Activated CD8-positive, alpha-beta memory T cell treated with anti-CD3 and anti-CD28 coated beads, Interleukin-2, amount 10 ng/mL, durations not matched to agents 7 days and 5 days (primary cell): ENCODE measurements at regions of chr20 and their contacts with region 1.

Region 1: GRCh38 chr20:45095753-45096371 is 5.1 kb downstream of the KCNS1 start:
- DNase-seq: peak; percentile 72
- ATAC-seq: peak; percentile 59
- H3K4me3 Mint-ChIP-seq: no peak overlapping the region
- H3K27ac Mint-ChIP-seq: no peak overlapping the region
- H3K4me1 Mint-ChIP-seq: peaks cover 16% of the 10 kb centered on the region
- H3K27me3 Mint-ChIP-seq: peaks cover 34% of the 10 kb centered on the region

Region 2: DNA sequence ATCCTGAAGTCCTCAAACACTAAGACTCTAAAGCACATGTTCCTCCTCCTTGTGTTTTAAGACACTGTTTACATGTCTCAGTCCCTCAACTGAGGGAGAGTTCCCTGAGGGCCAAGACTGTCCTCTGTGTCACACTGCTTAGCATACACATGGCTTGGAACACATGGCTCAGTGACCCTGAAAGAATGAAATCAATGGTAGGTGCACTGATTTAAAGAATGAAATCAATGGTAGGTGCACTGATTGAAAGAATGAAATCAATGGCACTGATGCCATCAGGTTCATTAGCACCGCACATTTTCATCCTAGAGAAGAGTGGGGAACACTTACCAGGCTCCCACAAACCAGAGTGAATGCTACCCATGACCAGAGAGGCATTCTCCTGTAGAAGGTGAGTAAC is 145.5 kb before region 1 on chr20:
- CTCF ChIA-PET with region 1: no interaction called
- DNase-seq: no peak
- ATAC-seq: no peak
- H3K4me3 Mint-ChIP-seq: no peak overlapping the region
- H3K27ac Mint-ChIP-seq: peak overlapping the region; percentile 1
- H3K4me1 Mint-ChIP-seq: peaks cover 3% of the 10 kb centered on the region
- H3K27me3 Mint-ChIP-seq: no peaks in the 10 kb centered on the region

Region 3: DNA sequence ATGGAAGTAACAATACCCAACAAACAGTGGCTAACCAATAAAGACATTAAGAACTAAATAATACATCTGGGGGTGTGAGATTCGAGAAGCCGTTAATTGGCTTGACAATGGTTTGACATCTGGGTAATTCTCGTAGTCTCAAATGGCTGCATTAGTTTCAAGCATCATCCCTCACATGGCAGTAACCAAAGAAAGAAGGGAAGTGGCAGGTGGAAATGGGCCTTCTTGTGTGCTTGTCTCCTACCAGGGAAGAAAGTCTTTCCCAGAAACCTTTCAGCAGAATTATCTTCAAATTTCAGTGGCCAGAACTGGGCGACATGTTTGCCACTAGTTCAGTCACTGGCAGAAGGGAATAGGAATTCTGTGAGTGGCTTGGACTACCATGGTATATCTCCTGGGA is 119.2 kb before region 1 on chr20:
- CTCF ChIA-PET with region 1: no interaction called
- DNase-seq: no peak
- ATAC-seq: no peak
- H3K4me3 Mint-ChIP-seq: no peak overlapping the region
- H3K27ac Mint-ChIP-seq: peak overlapping the region; percentile 95
- H3K4me1 Mint-ChIP-seq: peaks cover 65% of the 10 kb centered on the region
- H3K27me3 Mint-ChIP-seq: no peaks in the 10 kb centered on the region

Region 4: DNA sequence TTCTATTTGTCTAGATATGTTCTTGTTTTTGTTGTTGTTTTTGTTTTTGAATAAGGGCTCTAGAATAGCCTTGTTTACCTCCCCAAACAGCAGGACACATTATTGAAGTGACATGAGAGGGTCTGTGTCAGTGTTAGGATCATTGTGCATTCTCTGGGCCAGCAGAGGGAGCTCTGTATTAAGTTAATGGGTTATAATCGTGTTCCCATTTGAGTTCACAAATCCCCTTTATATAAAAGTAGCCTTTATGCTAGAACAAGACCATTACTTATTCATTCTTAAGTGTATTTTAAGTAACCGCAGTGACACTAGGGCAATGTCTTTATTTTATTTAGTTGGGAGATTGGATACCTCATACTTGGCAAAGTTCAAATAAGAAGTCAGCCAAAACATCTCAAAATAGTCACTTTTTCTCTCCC is 84.7 kb before region 1 on chr20:
- CTCF ChIA-PET with region 1: interaction called, 35 read pairs
- DNase-seq: peak; percentile 61
- ATAC-seq: peak; percentile 72
- H3K4me3 Mint-ChIP-seq: no peak overlapping the region
- H3K27ac Mint-ChIP-seq: peak overlapping the region; percentile 25
- H3K4me1 Mint-ChIP-seq: peaks cover 31% of the 10 kb centered on the region
- H3K27me3 Mint-ChIP-seq: no peaks in the 10 kb centered on the region

Region 5: GRCh38 chr20:45044084-45044573 is 51.7 kb before region 1 on chr20:
- CTCF ChIA-PET with region 1: interaction called, 150 read pairs
- DNase-seq: peak; percentile 66
- ATAC-seq: peak; percentile 87
- H3K4me3 Mint-ChIP-seq: no peak overlapping the region
- H3K27ac Mint-ChIP-seq: peak overlapping the region; percentile 83
- H3K4me1 Mint-ChIP-seq: peaks cover 50% of the 10 kb centered on the region
- H3K27me3 Mint-ChIP-seq: no peaks in the 10 kb centered on the region

Region 6: GRCh38 chr20:45052698-45053429 is 43.0 kb before region 1 on chr20:
- CTCF ChIA-PET with region 1: interaction called, 48 read pairs
- DNase-seq: peak; percentile 75
- ATAC-seq: peak; percentile 85
- H3K4me3 Mint-ChIP-seq: peak overlapping the region; percentile 17
- H3K27ac Mint-ChIP-seq: peak overlapping the region; percentile 75
- H3K4me1 Mint-ChIP-seq: peaks cover 73% of the 10 kb centered on the region
- H3K27me3 Mint-ChIP-seq: no peaks in the 10 kb centered on the region

Region 7: DNA sequence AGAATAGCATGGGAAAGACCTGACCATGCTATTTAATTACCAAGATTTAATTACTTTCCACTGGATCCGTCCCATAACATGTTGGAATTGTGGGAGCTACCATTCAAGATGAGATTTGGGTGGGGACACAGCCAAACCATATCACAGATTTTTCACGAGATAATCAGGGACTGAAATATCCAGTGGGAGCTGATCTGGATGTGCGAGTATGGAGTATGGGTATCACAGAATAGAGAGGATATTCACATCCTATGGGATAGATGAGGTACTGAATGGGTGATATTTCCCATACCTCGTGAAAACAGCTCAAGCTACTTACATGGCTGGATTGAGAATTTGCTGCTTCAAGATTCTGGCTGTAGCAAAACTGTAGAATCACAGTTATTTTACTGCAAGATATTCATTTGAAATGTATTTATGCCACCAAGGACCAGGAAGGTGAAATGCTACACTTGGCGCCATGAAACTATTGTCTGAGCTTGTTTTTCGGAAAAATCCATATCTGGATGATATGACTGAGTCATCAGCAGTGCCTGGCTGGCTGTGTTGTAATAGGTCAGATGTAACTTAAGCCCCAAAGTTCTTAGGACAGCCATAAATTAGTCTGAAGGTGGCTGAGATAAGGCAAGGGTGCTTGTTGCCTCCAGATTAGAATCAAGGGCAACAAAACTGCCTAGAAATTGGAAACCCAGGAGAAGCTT is 24.8 kb before region 1 on chr20:
- CTCF ChIA-PET with region 1: interaction called, 23 read pairs
- DNase-seq: no peak
- ATAC-seq: no peak
- H3K4me3 Mint-ChIP-seq: no peak overlapping the region
- H3K27ac Mint-ChIP-seq: peak overlapping the region; percentile 31
- H3K4me1 Mint-ChIP-seq: peaks cover 1% of the 10 kb centered on the region
- H3K27me3 Mint-ChIP-seq: no peaks in the 10 kb centered on the region

Region 8: DNA sequence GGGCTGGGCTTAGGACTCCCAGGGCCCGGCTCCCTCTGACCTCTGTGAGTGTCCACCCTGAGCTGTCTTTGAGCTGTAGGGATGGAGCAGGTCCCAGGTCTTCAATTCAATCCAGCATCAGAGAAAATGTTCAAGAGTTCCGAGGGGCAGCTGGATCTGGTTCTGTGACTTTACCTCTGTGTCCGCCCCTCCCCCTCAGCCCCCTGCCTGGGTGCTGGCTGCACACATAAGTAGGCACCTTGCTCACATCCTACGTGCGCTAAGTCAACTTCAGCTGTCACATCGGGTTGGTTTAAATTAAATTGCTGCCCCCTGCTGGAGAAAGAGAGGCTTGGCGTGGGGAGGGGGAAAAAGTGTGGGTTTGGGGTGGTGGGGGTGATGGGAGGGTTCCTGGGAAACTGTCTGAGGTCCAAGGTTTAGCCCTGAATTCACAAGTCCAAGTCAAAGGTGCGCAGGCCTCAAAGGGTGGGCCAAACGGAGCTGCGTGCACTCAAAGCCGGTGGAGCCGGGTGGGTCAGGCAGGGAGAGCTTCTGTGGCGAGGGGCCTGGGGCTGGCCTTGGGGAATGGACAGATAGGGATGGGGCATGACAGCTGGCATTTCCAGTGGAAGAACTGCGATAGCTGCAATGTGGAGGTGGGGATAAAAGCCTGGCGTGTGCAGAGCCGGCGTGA is 16.1 kb after region 1 on chr20:
- CTCF ChIA-PET with region 1: interaction called, 122 read pairs
- DNase-seq: no peak
- ATAC-seq: no peak
- H3K4me3 Mint-ChIP-seq: no peak overlapping the region
- H3K27ac Mint-ChIP-seq: no peak overlapping the region
- H3K4me1 Mint-ChIP-seq: peaks cover 3% of the 10 kb centered on the region
- H3K27me3 Mint-ChIP-seq: peaks cover 3% of the 10 kb centered on the region

Region 9: DNA sequence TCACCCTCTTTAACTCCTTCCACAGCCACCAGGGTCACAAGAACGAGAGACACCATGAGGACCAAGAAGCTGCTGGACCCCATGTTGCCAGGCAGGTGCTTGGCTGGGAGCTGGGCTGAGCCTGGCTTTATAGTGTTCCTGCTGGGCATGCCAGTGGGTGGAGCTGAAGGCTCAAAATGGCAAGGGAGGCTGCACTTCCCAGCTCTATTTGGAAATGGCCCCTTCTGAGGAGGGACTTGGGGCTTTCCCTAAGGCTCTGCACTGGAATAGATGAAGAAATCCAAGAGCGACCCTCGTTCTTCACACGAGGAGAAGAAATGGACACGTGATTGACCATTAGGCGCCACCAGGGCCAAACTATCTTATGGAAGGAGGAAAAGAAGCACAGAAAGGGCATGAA is 28.5 kb after region 1 on chr20 and contains the start of gene WFDC12:
- CTCF ChIA-PET with region 1: no interaction called
- DNase-seq: no peak
- ATAC-seq: no peak
- H3K4me3 Mint-ChIP-seq: no peak within 1 kb of the TSS
- H3K27ac Mint-ChIP-seq: no peak within 1 kb of the TSS
- H3K4me1 Mint-ChIP-seq: no peaks in the 10 kb centered on the region
- H3K27me3 Mint-ChIP-seq: peaks cover 56% of the 10 kb centered on the region
- total RNA-seq, gene WFDC12: not detected

Region 10: DNA sequence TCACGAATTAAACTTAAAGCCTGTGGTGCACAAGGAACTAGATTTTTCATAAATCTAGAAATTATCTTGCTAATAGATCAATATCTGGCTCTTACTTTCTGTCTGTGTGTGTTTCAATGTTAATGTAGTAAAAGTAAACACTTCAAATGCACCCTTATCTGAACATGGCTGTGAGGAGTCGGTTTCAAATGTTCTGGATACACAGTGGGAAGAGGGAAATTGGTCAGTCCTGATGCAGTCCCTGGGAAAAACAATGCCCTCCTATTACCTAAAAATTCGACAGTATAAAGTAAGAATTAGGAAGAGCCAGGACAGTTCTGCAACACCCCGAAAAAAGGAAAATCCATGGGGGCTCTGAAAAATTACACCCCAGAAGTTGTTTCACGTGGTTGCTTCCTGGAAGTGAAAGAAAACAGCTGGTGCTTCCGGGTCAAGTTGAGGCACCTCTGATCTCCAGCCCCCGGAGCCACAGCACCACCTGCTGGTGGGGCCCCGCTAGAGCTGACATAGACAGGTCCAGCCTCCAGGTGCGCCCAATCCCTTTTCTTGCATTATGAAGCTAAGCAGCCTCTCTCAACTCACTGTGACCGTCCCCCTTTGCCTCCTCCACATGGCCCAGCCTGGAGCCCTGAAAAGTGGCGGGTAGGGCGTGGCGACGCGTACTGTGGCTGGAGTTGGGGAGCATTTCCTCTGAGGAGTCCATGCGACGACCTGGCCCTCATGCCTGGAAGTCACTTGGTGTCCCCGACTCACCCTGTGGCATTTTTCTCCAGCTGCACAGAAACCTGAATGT is 133.6 kb after region 1 on chr20:
- CTCF ChIA-PET with region 1: interaction called, 10 read pairs
- DNase-seq: peak; percentile 69
- ATAC-seq: peak; percentile 53
- H3K4me3 Mint-ChIP-seq: no peak overlapping the region
- H3K27ac Mint-ChIP-seq: no peak overlapping the region
- H3K4me1 Mint-ChIP-seq: peaks cover 2% of the 10 kb centered on the region
- H3K27me3 Mint-ChIP-seq: peaks cover 48% of the 10 kb centered on the region